ENCODE measurements at regions of chr10 and their contacts with region 1.

Region 1: GRCh38 chr10:84352251-84352842 is 24.0 kb downstream of the CCSER2 start:
- DNase-seq: peak; percentile 43
- ATAC-seq: peak; percentile 70

Region 2: GRCh38 chr10:84264611-84265141 is 87.7 kb before region 1 on chr10:
- intact Hi-C with region 1: loop called (anchors 10 kb)
- DNase-seq: peak; percentile 76
- ATAC-seq: peak; percentile 94